GM12878 (cell line): ENCODE measurements at regions of chr4 and their contacts with region 1.

Region 1: GRCh38 chr4:48085821-48086607 is 48.0 kb downstream of the TXK start:
- DNase-seq: no peak
- ATAC-seq: no peak; the same call in 2 of the 3 replicates
- H3K4me3 ChIP-seq: no peak overlapping the region
- H3K27ac ChIP-seq: no peak overlapping the region
- H3K4me1 ChIP-seq: no peaks in the 10 kb centered on the region; the same call in 1 of the 2 replicates
- H3K27me3 ChIP-seq: no peaks in the 10 kb centered on the region
- CTCF ChIP-seq: no peak
- EP300 ChIP-seq: no peak
- POLR2A ChIP-seq: no peak
- RAD21 ChIP-seq: no peak

Region 2: DNA sequence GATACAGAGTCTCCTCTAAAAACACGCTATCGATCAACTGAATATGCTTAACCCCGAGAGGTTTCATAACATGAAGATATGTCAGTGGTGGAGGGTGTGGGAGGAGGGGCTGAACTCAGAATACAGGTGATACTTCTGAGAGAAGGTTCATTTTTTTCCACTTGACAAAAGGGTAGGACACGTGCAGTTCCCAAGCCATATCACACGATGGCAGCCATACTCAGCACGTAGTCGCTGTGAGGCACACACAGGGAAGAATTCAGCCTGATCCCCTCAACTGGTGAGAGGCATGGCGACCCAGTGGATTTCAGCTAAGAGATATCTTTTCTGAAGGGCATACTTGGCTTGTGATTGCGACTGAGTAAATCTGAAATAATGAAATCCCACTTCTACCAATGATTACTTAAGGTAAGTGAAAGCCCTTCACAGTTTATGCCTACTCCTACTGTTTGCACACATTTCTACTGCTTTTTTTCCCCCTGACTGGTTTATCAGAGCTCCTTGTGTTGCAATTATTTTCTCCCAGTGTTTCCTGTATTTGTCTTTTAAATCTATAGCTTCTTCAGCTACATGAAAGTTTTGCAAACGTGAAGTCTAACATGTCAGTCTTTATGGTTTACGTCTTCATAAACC is 381.2 kb before region 1 on chr4:
- CTCF ChIA-PET with region 1: interaction called, 3 read pairs
- POLR2A ChIA-PET with region 1: no interaction called
- RAD21 ChIA-PET with region 1: no interaction called
- SMC1A ChIA-PET with region 1: no interaction called
- in situ Hi-C with region 1: loop called (anchors 10 kb)
- intact Hi-C with region 1: loop called (anchors 5 kb)
- DNase-seq: no peak
- ATAC-seq: peak; percentile 89
- H3K4me3 ChIP-seq: no peak overlapping the region
- H3K27ac ChIP-seq: no peak overlapping the region
- H3K4me1 ChIP-seq: no peaks in the 10 kb centered on the region
- H3K27me3 ChIP-seq: peaks cover 0 to 3% of the 10 kb centered on the region in 2 experiments; a peak in 2 of 4 replicates
- CTCF ChIP-seq: peak; percentile 44 to 51 (median 49); a peak in 4 of 6 replicates
- EP300 ChIP-seq: no peak
- POLR2A ChIP-seq: no peak
- RAD21 ChIP-seq: peak; percentile 65

Region 3: DNA sequence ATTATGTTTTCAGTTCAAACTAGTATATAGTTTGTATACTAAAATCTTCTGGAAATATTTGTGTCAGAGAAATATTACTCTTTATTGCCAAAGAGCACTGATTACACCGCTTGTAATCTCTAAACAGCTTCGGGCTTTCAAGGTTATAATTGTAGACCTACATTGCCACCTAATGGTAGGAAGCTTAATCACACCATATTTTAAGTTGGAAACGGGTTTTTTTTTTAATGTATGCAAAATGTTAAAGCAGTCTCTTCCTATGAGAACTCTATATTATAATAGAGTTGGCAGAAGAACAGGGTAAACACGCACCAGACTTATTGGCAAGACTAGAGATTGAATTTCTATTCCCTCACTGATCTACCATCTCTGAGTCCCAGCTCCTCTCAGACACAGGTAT is 152.2 kb before region 1 on chr4:
- CTCF ChIA-PET with region 1: interaction called, 10 read pairs
- POLR2A ChIA-PET with region 1: no interaction called
- RAD21 ChIA-PET with region 1: interaction called, 8 read pairs
- SMC1A ChIA-PET with region 1: interaction called, 9 read pairs
- in situ Hi-C with region 1: loop called (anchors 5 kb)
- intact Hi-C with region 1: loop called (anchors 2 kb)
- DNase-seq: no peak
- ATAC-seq: peak; percentile 77
- H3K4me3 ChIP-seq: no peak overlapping the region
- H3K27ac ChIP-seq: no peak overlapping the region
- H3K4me1 ChIP-seq: no peaks in the 10 kb centered on the region
- H3K27me3 ChIP-seq: no peaks in the 10 kb centered on the region
- CTCF ChIP-seq: peak; percentile 44 to 70 (median 64); a peak in 5 of 6 replicates
- EP300 ChIP-seq: no peak
- POLR2A ChIP-seq: no peak
- RAD21 ChIP-seq: peak; percentile 80

Region 4: DNA sequence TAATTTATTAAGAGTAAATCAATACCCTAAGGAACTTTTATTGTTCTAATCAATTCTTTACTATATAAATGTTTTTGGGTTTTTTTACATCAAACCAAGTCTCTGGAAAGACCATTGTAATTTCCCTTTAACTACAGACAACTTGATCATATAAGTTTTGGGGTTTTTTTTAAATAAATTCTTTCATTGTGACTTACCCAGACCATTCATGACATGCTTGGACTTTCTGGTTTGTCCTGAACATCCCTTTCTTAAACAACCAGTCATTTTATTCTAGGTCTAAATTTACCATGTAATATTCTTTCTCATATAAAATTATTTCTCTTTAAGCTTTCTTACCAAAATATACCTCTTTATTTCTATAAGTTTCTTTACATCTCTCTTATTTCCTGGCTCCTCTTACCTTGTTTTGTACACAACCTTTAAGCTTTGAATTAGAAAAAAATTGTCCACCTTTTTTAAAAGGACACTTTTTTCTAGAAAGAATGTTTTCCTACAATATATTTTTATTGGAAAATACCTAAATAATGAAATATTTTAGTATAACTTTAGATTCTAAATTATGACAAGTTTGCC is 77.9 kb before region 1 on chr4:
- CTCF ChIA-PET with region 1: interaction called, 129 read pairs
- POLR2A ChIA-PET with region 1: no interaction called
- RAD21 ChIA-PET with region 1: interaction called, 75 read pairs
- SMC1A ChIA-PET with region 1: interaction called, 74 read pairs
- in situ Hi-C with region 1: loop called (anchors 5 kb)
- intact Hi-C with region 1: loop called (anchors 1 kb)
- DNase-seq: no peak
- ATAC-seq: no peak
- H3K4me3 ChIP-seq: no peak overlapping the region
- H3K27ac ChIP-seq: no peak overlapping the region
- H3K4me1 ChIP-seq: no peaks in the 10 kb centered on the region
- H3K27me3 ChIP-seq: no peaks in the 10 kb centered on the region
- CTCF ChIP-seq: no peak
- EP300 ChIP-seq: no peak
- POLR2A ChIP-seq: no peak
- RAD21 ChIP-seq: no peak

Region 5: GRCh38 chr4:48033825-48034413 is 52.1 kb before region 1 on chr4:
- CTCF ChIA-PET with region 1: interaction called, 119 read pairs
- POLR2A ChIA-PET with region 1: interaction called, 4 read pairs
- RAD21 ChIA-PET with region 1: interaction called, 12 read pairs
- SMC1A ChIA-PET with region 1: interaction called, 62 read pairs
- in situ Hi-C with region 1: no loop called
- intact Hi-C with region 1: loop called (anchors 1 kb)
- DNase-seq: no peak
- ATAC-seq: peak; percentile 74
- H3K4me3 ChIP-seq: no peak overlapping the region
- H3K27ac ChIP-seq: peak overlapping the region; percentile 20; the same call in 1 of the 2 replicates
- H3K4me1 ChIP-seq: peaks cover 48% of the 10 kb centered on the region
- H3K27me3 ChIP-seq: no peaks in the 10 kb centered on the region
- CTCF ChIP-seq: peak; percentile 45 to 63 (median 60)
- EP300 ChIP-seq: no peak
- POLR2A ChIP-seq: no peak
- RAD21 ChIP-seq: peak; percentile 56

Region 6: DNA sequence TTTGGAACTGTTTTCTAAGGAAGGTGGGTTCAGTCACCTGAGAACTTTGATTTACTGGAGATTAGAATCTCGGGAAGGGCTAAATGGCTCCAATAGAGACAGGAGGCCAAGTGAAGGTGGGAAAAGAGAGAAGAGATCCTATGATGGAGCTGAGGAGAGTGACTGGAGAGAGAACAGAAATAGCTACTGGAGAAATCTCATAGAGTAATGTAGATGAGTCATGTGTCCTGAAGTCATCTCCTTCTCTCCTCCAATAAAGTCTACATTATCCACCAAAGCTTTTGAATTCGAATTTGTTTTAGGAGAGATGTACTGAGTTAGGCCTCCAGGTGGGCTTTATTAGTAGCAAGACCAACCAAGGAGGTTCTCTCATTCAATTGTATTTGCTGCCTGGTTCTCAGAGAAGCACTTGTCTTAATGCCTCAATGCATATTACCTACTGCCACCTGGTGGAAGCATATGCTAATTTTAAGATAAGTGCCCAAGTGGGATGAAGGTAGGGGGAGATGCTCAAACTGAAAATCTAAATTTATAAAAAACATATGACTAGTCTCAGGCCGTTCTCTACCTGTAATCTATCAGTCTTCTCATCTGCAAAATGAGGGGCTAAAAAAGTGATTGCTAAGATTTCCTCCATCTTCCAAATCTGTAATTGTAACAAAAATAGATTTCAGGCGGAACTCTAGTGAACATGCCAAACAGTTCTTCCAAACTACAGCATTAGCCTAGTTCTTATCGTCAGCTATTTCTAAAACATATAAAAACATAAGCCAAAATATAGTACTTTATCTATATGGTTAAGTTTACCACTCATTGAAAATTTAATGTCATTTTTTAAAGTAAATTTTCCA is 23.6 kb after region 1 on chr4:
- CTCF ChIA-PET with region 1: interaction called, 11 read pairs
- POLR2A ChIA-PET with region 1: no interaction called
- RAD21 ChIA-PET with region 1: interaction called, 3 read pairs
- SMC1A ChIA-PET with region 1: interaction called, 5 read pairs
- in situ Hi-C with region 1: no loop called
- intact Hi-C with region 1: no loop called
- DNase-seq: no peak
- ATAC-seq: peak; percentile 90
- H3K4me3 ChIP-seq: no peak overlapping the region
- H3K27ac ChIP-seq: no peak overlapping the region
- H3K4me1 ChIP-seq: no peaks in the 10 kb centered on the region
- H3K27me3 ChIP-seq: no peaks in the 10 kb centered on the region
- CTCF ChIP-seq: peak; percentile 57 to 64 (median 60)
- EP300 ChIP-seq: no peak
- POLR2A ChIP-seq: no peak
- RAD21 ChIP-seq: peak; percentile 74

Region 7: DNA sequence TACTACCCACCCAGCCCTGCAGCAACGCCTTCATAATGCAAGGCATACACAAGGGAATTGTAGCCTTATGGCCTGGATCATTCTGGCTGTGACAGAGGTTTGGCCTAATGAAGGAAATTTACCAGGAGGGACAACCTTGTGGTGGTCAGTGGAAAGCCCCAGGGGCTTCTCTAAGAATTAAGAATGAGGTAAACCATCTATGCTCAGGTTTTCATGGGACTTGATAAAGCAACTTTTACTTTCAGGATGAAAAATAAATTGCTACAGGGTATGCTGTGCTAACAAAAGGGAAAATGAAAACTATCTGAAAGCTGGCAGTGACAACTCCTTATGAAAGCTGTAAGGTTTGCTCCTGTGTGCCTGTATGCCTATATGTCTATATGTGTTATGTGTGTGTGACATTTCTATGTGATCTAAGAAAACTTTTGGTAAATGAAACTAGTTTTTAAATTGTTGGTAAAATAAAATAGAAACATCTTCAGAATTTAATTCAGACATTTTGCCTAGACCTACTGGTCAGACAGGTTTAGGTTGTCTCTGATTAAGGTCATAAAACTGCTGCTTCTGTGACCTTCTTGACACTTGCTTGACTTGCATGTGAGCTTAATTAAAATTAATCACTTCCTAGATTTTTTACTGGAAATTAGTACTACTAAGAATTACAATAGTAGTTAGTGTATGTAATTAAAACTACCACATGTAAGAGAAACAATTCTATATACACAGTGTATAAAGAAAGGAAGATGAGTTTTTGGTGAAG is 68.0 kb after region 1 on chr4:
- CTCF ChIA-PET with region 1: no interaction called
- POLR2A ChIA-PET with region 1: no interaction called
- RAD21 ChIA-PET with region 1: no interaction called
- SMC1A ChIA-PET with region 1: no interaction called
- in situ Hi-C with region 1: no loop called
- intact Hi-C with region 1: no loop called
- DNase-seq: peak; percentile 39
- ATAC-seq: peak; percentile 91
- H3K4me3 ChIP-seq: no peak overlapping the region
- H3K27ac ChIP-seq: peak overlapping the region; percentile 63
- H3K4me1 ChIP-seq: peaks cover 6% of the 10 kb centered on the region; the same call in 1 of the 2 replicates
- H3K27me3 ChIP-seq: no peaks in the 10 kb centered on the region
- CTCF ChIP-seq: no peak
- EP300 ChIP-seq: no peak
- POLR2A ChIP-seq: no peak
- RAD21 ChIP-seq: no peak

Region 8: GRCh38 chr4:48388525-48389154 is 302.6 kb after region 1 on chr4:
- CTCF ChIA-PET with region 1: no interaction called
- POLR2A ChIA-PET with region 1: no interaction called
- RAD21 ChIA-PET with region 1: no interaction called
- SMC1A ChIA-PET with region 1: no interaction called
- in situ Hi-C with region 1: no loop called
- intact Hi-C with region 1: no loop called
- DNase-seq: no peak
- ATAC-seq: no peak
- H3K4me3 ChIP-seq: no peak overlapping the region
- H3K27ac ChIP-seq: no peak overlapping the region
- H3K4me1 ChIP-seq: no peaks in the 10 kb centered on the region
- H3K27me3 ChIP-seq: no peaks in the 10 kb centered on the region
- CTCF ChIP-seq: no peak
- EP300 ChIP-seq: no peak
- POLR2A ChIP-seq: no peak
- RAD21 ChIP-seq: no peak

Region 9: GRCh38 chr4:48594180-48594579 is 508.2 kb after region 1 on chr4:
- CTCF ChIA-PET with region 1: no interaction called
- POLR2A ChIA-PET with region 1: no interaction called
- RAD21 ChIA-PET with region 1: no interaction called
- SMC1A ChIA-PET with region 1: no interaction called
- in situ Hi-C with region 1: no loop called
- intact Hi-C with region 1: no loop called
- DNase-seq: no peak
- ATAC-seq: no peak
- H3K4me3 ChIP-seq: no peak overlapping the region
- H3K27ac ChIP-seq: no peak overlapping the region
- H3K4me1 ChIP-seq: no peaks in the 10 kb centered on the region
- H3K27me3 ChIP-seq: no peaks in the 10 kb centered on the region
- CTCF ChIP-seq: no peak
- EP300 ChIP-seq: no peak
- POLR2A ChIP-seq: no peak
- RAD21 ChIP-seq: no peak